HEK293 (cell line): ENCODE measurements at regions of chr7 and their contacts with region 1.

Region 1: DNA sequence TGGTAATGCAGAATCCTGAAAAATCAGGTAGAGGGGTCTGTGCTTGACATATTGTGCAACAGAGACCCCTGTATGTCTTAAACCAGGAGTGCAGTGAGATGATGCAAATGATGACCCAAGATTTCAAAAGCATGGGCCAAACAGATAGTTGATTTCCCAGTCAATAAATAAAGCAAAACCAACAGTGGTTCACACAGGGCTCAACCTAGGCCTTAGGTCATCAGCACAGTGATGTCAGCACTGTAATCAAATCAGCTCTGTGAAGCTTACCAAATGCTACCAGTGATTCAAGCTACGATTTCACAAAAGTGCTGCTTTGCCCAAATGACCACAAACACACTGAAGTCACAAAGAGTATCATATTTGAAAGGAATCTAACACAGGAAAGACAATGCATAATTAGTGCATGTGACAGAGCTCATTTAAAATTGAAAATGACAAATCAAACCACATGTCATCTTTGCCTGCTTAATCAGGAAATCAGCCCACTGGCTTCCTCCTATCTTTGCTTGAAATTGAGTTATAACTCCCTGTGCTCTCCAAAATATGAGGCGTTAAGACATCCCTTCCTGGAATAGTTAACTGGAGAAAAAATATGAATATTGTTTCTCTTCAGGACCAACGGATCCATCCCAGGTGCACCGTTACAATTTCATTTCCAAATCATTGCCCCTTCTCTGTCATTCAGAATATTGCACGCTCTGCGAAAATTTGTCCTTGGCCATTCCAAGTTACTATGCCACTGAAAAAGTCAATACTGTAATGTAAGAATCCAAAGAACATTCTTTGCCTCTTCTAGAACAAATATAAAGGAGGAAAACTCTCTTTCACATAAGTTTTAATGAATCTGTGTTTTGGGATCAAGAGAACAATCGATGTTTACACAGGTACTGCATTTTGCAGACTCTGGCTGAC is 41.9 kb upstream of the ASL start:
- H3K4me3 ChIP-seq: no peak overlapping the region
- H3K27ac ChIP-seq: no peak overlapping the region
- H3K4me1 ChIP-seq: peaks cover 4% of the 10 kb centered on the region; the same call in 1 of the 2 replicates
- CTCF ChIP-seq: no peak

Region 2: DNA sequence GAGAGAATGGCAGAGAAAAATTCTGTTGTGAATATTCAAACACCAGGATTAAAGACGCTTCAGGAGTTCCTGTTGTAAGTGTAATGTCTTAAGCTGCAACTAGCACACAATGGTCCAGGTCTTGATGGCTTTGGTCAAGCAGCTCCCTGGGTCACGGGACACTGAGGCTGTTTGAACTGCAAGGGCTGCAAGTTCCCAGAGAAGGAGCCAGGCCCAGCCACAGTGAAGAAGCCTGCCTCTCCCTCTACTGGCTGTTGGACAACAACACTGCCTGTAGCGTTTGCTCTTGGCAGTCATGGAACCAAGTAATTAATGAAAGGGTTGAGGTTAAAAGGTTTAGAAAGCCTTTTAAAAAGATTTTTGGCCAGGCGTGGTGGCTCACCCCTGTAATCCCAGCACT is 19.8 kb before region 1 on chr7:
- CTCF ChIA-PET with region 1: no interaction called
- POLR2A ChIA-PET with region 1: no interaction called
- H3K4me3 ChIP-seq: no peak overlapping the region
- H3K27ac ChIP-seq: no peak overlapping the region
- H3K4me1 ChIP-seq: no peaks in the 10 kb centered on the region
- CTCF ChIP-seq: no peak

Region 3: GRCh38 chr7:66083677-66084076 is 49.9 kb after region 1 on chr7:
- CTCF ChIA-PET with region 1: no interaction called
- POLR2A ChIA-PET with region 1: no interaction called
- H3K4me3 ChIP-seq: no peak overlapping the region
- H3K27ac ChIP-seq: no peak overlapping the region
- H3K4me1 ChIP-seq: no peaks in the 10 kb centered on the region
- CTCF ChIP-seq: no peak

Region 4: DNA sequence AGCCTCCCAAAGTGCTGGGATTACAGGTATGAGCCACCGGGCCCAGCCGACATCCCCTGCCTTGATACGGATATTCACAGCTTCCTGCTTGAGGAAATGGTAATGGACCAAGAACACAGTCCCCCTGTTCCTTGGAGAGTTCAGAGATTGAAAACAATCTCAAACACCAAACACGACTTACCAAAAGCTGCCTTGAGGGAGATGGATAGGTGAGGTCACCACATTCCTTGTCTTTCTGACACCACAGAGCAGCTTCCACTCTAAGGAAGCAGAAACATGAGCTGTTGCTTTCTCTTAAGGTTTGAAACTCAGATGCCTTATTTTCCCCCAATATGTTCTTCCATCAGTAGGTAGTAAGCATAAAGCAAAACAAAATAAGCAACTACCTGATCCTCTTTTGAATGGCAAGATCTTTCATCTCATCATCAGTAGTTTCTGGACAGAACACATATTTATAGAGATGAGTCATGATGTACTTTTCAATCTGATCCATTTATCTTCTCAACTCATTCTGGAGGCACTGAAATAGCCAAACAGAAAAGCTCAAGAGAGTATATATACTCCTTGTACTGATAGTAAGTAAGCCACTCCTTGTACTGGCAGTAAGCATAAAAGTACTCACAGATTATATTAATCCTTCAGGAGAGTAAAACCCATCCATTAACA is 395.9 kb after region 1 on chr7:
- CTCF ChIA-PET with region 1: no interaction called
- POLR2A ChIA-PET with region 1: interaction called, 10 read pairs
- H3K4me3 ChIP-seq: no peak overlapping the region
- H3K27ac ChIP-seq: no peak overlapping the region
- H3K4me1 ChIP-seq: no peaks in the 10 kb centered on the region
- CTCF ChIP-seq: no peak